Adrenal gland (tissue), 19 donors: ENCODE measurements at regions of chr1 and their contacts with region 1.

Region 1: GRCh38 chr1:209576798-209577197 is 6.7 kb upstream of the CAMK1G start:
- DNase-seq: peak; percentile 79 to 93 (median 87)
- H3K4me3 ChIP-seq: no peak overlapping the region
- H3K27ac ChIP-seq: peak overlapping the region in 1 of 5 donors; percentile 46
- H3K4me1 ChIP-seq: peaks cover 0 to 5% of the 10 kb centered on the region in 2 donors
- H3K27me3 ChIP-seq: peaks cover 3% of the 10 kb centered on the region
- CTCF ChIP-seq: peak; percentile 87 to 96 (median 94)
- POLR2A ChIP-seq: no peak

Region 2: DNA sequence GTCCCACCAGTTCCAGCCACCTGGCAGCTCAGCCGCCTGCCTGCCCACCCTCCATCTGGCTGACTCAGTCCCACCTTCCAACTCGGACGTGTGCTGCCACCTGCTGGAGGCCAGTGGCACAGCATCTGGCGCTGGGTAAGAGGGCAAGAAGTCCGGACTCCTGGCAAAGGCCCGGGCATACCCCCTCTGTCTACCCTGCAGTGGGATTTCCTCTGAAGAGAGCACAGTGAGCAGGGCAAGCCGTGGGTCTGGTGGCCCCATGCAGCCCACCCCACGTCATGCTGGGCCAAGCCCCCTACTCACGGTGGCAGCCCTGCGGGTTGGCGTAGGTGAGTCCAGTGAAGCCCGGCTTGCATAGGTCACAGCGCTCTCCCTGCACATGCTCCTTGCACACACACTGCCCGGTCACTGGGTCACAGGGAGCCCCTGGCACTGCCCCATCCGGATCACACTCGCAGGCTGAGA is 51.0 kb after region 1 on chr1:
- intact Hi-C with region 1: loop called (anchors 2 to 5 kb)
- DNase-seq: peak; percentile 64 to 89 (median 80)
- H3K4me3 ChIP-seq: no peak overlapping the region
- H3K27ac ChIP-seq: no peak overlapping the region
- H3K4me1 ChIP-seq: peaks cover 0 to 17% of the 10 kb centered on the region in 2 donors
- H3K27me3 ChIP-seq: no peaks in the 10 kb centered on the region
- CTCF ChIP-seq: peak; percentile 91 to 98 (median 93)
- POLR2A ChIP-seq: no peak